K562 (cell line): ENCODE measurements at regions of chr6 and their contacts with region 1.

Region 1: GRCh38 chr6:16964553-16965501 is 137.0 kb upstream of the STMND1 start:
- DNase-seq: peak; percentile 74 to 79 (median 76)
- ATAC-seq: peak; percentile 100
- H3K4me3 ChIP-seq: no peak overlapping the region
- H3K27ac ChIP-seq: no peak overlapping the region
- H3K4me1 ChIP-seq: no peaks in the 10 kb centered on the region
- H3K27me3 ChIP-seq: peaks cover 0 to 9% of the 10 kb centered on the region in 2 experiments; a peak in 1 of 5 replicates
- CTCF ChIP-seq: peak; percentile 87 to 96 (median 93)
- EP300 ChIP-seq: no peak
- POLR2A ChIP-seq: no peak
- RAD21 ChIP-seq: peak; percentile 85 to 88

Region 2: DNA sequence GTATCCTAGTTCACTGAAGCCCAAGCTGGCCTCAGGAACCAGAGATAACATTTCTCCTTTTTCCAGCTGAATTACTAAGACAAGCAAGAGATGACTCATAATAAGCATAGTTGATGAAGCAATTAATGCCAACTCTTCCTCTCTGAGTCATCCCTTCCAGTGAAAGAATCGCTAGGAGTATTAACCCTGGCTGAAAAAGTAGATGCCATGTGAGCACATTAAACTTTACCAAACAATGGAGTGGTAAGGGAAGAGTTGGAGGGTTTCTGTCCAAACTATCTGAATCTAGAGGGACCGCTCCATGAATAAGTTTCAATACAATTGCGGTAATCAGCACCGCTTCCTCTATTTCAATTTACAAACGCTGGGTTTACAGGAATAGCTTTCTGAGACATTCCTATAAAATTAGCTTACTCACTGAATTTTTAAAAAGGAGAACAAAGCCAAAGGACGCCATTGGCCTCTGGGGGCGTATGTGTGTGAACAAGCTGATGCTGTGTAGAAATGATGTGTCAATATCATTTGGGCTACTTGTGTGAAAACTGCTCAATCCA is 251.8 kb before region 1 on chr6:
- CTCF ChIA-PET with region 1: no interaction called
- POLR2A ChIA-PET with region 1: no interaction called
- in situ Hi-C with region 1: no loop called
- intact Hi-C with region 1: loop called (anchors 5 kb)
- DNase-seq: peak in 3 of 4 experiments; percentile 13 to 17 (median 15)
- ATAC-seq: peak; percentile 71; the same call in 2 of the 3 replicates
- H3K4me3 ChIP-seq: no peak overlapping the region
- H3K27ac ChIP-seq: no peak overlapping the region
- H3K4me1 ChIP-seq: no peaks in the 10 kb centered on the region
- H3K27me3 ChIP-seq: no peaks in the 10 kb centered on the region
- CTCF ChIP-seq: peak; percentile 28 to 42 (median 30); a peak in 3 of 6 replicates
- EP300 ChIP-seq: peak; percentile 61
- POLR2A ChIP-seq: no peak
- RAD21 ChIP-seq: no peak